MCF 10A (cell line): ENCODE measurements at regions of chr11 and their contacts with region 1.

Region 1: GRCh38 chr11:112086422-112087191 is at the starts of genes SDHD and TIMM8B:
- DNase-seq: peak; percentile 99
- H3K4me3 Mint-ChIP-seq: peak within 1 kb of the TSS; percentile 88
- H3K27ac Mint-ChIP-seq: peak within 1 kb of the TSS; percentile 95
- H3K4me1 Mint-ChIP-seq: peaks cover 43% of the 10 kb centered on the region
- H3K27me3 Mint-ChIP-seq: no peaks in the 10 kb centered on the region
- CTCF ChIP-seq: peak; percentile 21
- total RNA-seq, gene SDHD: 119 and 124 TPM in 2 replicates
- total RNA-seq, gene TIMM8B: 58.1 and 70.8 TPM in 2 replicates

Region 2: GRCh38 chr11:111938687-111939160 is 147.9 kb before region 1 on chr11:
- CTCF ChIA-PET with region 1: no interaction called
- POLR2A ChIA-PET with region 1: interaction called, 17 read pairs
- intact Hi-C with region 1: no loop called
- DNase-seq: peak; percentile 67
- H3K4me3 Mint-ChIP-seq: peak overlapping the region; percentile 71
- H3K27ac Mint-ChIP-seq: peak overlapping the region; percentile 8
- H3K4me1 Mint-ChIP-seq: peaks cover 60% of the 10 kb centered on the region
- H3K27me3 Mint-ChIP-seq: no peaks in the 10 kb centered on the region
- CTCF ChIP-seq: no peak

Region 3: GRCh38 chr11:112100462-112100861 is 13.9 kb after region 1 on chr11:
- CTCF ChIA-PET with region 1: interaction called, 3 read pairs
- POLR2A ChIA-PET with region 1: interaction called, 23 read pairs
- intact Hi-C with region 1: no loop called
- DNase-seq: no peak
- H3K4me3 Mint-ChIP-seq: no peak overlapping the region
- H3K27ac Mint-ChIP-seq: no peak overlapping the region
- H3K4me1 Mint-ChIP-seq: no peaks in the 10 kb centered on the region
- H3K27me3 Mint-ChIP-seq: no peaks in the 10 kb centered on the region
- CTCF ChIP-seq: no peak

Region 4: GRCh38 chr11:112113539-112114457 is 27.2 kb after region 1 on chr11:
- CTCF ChIA-PET with region 1: interaction called, 12 read pairs
- POLR2A ChIA-PET with region 1: interaction called, 6 read pairs
- intact Hi-C with region 1: no loop called
- DNase-seq: peak; percentile 75
- H3K4me3 Mint-ChIP-seq: no peak overlapping the region
- H3K27ac Mint-ChIP-seq: no peak overlapping the region
- H3K4me1 Mint-ChIP-seq: no peaks in the 10 kb centered on the region
- H3K27me3 Mint-ChIP-seq: no peaks in the 10 kb centered on the region
- CTCF ChIP-seq: peak; percentile 73

Region 5: DNA sequence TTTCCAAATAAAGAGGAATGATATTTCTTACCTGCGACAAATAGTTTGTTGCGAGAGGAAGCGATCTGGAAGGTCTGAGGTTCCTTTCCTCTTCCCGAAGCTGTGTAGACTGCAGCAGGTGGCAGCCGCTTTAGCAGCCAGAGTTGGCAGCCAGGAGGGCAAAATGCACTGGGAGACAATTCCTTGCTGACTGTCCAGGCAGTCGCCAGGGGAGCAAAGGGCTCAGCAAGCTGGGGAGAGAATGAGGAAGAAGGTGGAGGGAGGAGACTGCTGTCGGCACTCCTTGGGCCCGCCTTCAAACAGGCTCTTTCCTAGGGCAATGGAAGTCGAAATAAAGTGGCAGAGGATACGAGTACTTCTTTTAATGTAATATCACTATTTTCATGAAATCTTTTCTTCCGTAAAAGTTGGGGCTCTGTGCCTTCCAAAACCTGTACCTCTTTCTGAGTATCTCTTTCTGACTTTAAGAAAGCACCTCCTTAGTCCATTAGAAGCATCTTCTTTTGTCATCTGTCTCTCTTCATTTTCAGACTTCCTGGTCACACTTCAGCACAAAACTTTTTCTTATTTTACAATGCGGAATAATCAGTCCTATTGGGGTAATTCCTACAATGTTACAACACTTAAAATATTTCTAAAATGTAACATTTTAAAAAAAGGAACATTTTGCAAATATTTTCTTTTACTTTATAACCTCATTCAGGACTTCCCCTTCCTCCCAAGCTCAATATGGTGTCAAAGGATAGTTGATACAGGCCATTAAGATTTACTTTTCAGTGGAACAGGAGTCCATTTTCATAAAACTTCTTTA is 77.5 kb after region 1 on chr11 and contains the start of gene IL18:
- CTCF ChIA-PET with region 1: no interaction called
- POLR2A ChIA-PET with region 1: interaction called, 30 read pairs
- intact Hi-C with region 1: no loop called
- DNase-seq: peak; percentile 88
- H3K4me3 Mint-ChIP-seq: peak within 1 kb of the TSS; percentile 96
- H3K27ac Mint-ChIP-seq: peak within 1 kb of the TSS; percentile 97
- H3K4me1 Mint-ChIP-seq: peaks cover 53% of the 10 kb centered on the region
- H3K27me3 Mint-ChIP-seq: no peaks in the 10 kb centered on the region
- CTCF ChIP-seq: no peak
- total RNA-seq, gene IL18: 124 and 189 TPM in 2 replicates

Region 6: DNA sequence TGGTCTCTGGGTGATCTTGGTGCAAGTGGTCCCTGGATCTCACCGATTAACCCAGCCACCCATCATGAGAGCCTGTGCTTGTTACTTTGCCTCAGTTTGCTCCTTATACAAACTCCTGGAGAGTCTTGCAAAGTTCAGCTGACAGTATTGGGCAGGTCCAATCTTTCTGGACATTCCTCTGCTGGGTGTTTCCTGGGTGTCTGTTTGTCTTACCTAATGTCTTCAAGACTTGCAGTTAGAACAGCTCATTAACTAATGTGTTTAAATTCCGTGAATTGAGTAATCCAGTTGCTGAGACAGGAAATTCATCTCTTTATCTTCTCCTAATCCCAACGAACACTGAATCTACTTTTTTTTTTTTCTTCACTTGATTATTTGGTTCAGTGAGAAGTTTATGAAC is 109.3 kb after region 1 on chr11:
- CTCF ChIA-PET with region 1: no interaction called
- POLR2A ChIA-PET with region 1: interaction called, 14 read pairs
- intact Hi-C with region 1: no loop called
- DNase-seq: peak; percentile 80
- H3K4me3 Mint-ChIP-seq: peak overlapping the region; percentile 69
- H3K27ac Mint-ChIP-seq: peak overlapping the region; percentile 90
- H3K4me1 Mint-ChIP-seq: peaks cover 16% of the 10 kb centered on the region
- H3K27me3 Mint-ChIP-seq: no peaks in the 10 kb centered on the region
- CTCF ChIP-seq: no peak

Region 7: GRCh38 chr11:112280268-112281126 is 193.9 kb after region 1 on chr11:
- CTCF ChIA-PET with region 1: interaction called, 5 read pairs
- POLR2A ChIA-PET with region 1: interaction called, 8 read pairs
- intact Hi-C with region 1: loop called (anchors 1 kb)
- DNase-seq: peak; percentile 85
- H3K4me3 Mint-ChIP-seq: peak overlapping the region; percentile 78
- H3K27ac Mint-ChIP-seq: no peak overlapping the region
- H3K4me1 Mint-ChIP-seq: peaks cover 5% of the 10 kb centered on the region
- H3K27me3 Mint-ChIP-seq: peaks cover 5% of the 10 kb centered on the region
- CTCF ChIP-seq: peak; percentile 50

Region 8: DNA sequence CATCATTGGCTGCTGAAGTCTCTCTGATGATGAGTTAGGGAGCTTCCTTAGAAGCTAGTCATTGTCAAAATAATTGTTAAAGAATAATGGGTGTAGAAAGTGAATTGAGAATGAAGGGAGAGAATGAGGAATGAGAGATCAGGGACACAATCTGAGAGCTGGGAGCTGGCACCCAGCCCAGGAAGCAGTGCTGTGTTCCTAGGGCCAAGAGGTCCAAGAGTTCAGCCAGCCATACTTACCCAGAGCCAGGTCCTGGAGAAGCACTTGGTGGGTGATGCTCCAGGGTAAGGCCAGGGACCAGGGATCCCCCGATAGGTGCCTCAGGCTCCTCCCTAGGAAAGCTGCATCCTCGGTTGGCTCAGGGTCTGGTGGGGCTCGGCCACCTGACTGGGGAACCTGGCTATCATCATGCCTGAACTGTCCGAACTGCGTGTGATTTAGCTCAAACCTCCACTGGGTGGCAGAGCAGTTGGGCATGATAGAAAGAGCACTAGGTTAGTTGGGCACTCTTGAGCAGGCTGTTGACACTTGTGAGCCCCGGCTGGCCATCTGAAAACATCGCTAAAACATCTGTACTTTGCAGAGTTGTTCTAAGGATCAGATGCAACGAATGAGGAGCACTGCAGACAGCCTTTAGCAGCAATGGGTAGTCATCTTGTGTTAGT is 750.7 kb after region 1 on chr11:
- CTCF ChIA-PET with region 1: no interaction called
- POLR2A ChIA-PET with region 1: no interaction called
- intact Hi-C with region 1: no loop called
- DNase-seq: peak; percentile 33
- H3K4me3 Mint-ChIP-seq: no peak overlapping the region
- H3K27ac Mint-ChIP-seq: no peak overlapping the region
- H3K4me1 Mint-ChIP-seq: no peaks in the 10 kb centered on the region
- H3K27me3 Mint-ChIP-seq: peaks cover 15% of the 10 kb centered on the region
- CTCF ChIP-seq: peak; percentile 12